ENCODE measurements at regions of chr6 and their contacts with region 1.

Region 1: DNA sequence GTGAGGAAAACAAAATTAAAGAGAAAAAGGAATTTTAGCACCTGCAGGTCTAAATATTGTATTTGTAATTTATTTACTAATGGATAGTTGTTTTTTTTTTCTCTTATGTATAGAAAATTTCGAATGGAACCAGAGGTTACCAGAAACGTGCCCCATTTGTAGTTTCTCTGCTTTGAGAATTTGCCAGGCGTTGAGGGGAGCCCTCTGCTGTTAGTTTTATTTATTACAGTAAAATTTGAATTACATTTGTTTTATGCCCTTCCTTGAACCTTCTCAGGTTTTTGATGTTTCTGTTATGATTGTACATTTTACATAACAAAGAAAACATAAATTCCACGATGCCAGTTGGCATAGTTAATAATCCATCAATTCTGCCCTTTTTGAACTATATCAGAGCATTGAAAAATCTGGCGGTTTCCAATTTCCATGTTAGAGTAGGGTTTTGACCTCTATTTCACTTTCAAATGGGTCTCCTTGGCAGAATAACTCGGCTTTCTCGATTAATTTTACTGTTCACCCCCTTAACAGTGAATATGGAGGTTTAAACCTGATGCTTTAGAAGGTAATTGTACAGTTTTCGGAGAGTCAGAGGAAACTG is 35.1 kb upstream of the RFPL4B start:
- DNase-seq: no peak
- H3K4me3 ChIP-seq: no peak overlapping the region
- H3K27ac ChIP-seq: no peak overlapping the region
- H3K4me1 ChIP-seq: no peaks in the 10 kb centered on the region
- H3K27me3 ChIP-seq: no peaks in the 10 kb centered on the region
- CTCF ChIP-seq: peak in 3 of 4 experiments; percentile 46 to 68 (median 62)
- POLR2A ChIP-seq: no peak

Region 2: GRCh38 chr6:112180095-112180820 is 131.8 kb before region 1 on chr6:
- intact Hi-C with region 1: loop called (anchors 2 kb)
- DNase-seq: peak; percentile 78
- H3K4me3 ChIP-seq: no peak overlapping the region
- H3K27ac ChIP-seq: no peak overlapping the region
- H3K4me1 ChIP-seq: no peaks in the 10 kb centered on the region
- H3K27me3 ChIP-seq: no peaks in the 10 kb centered on the region
- CTCF ChIP-seq: peak; percentile 55 to 82 (median 74)
- POLR2A ChIP-seq: no peak

Region 3: GRCh38 chr6:112237595-112237994 is 74.5 kb before region 1 on chr6:
- intact Hi-C with region 1: loop called (anchors 10 kb)
- DNase-seq: no peak
- H3K4me3 ChIP-seq: no peak overlapping the region
- H3K27ac ChIP-seq: peak overlapping the region in 1 of 2 donors; percentile 6
- H3K4me1 ChIP-seq: no peaks in the 10 kb centered on the region
- H3K27me3 ChIP-seq: no peaks in the 10 kb centered on the region
- CTCF ChIP-seq: no peak
- POLR2A ChIP-seq: no peak

Region 4: DNA sequence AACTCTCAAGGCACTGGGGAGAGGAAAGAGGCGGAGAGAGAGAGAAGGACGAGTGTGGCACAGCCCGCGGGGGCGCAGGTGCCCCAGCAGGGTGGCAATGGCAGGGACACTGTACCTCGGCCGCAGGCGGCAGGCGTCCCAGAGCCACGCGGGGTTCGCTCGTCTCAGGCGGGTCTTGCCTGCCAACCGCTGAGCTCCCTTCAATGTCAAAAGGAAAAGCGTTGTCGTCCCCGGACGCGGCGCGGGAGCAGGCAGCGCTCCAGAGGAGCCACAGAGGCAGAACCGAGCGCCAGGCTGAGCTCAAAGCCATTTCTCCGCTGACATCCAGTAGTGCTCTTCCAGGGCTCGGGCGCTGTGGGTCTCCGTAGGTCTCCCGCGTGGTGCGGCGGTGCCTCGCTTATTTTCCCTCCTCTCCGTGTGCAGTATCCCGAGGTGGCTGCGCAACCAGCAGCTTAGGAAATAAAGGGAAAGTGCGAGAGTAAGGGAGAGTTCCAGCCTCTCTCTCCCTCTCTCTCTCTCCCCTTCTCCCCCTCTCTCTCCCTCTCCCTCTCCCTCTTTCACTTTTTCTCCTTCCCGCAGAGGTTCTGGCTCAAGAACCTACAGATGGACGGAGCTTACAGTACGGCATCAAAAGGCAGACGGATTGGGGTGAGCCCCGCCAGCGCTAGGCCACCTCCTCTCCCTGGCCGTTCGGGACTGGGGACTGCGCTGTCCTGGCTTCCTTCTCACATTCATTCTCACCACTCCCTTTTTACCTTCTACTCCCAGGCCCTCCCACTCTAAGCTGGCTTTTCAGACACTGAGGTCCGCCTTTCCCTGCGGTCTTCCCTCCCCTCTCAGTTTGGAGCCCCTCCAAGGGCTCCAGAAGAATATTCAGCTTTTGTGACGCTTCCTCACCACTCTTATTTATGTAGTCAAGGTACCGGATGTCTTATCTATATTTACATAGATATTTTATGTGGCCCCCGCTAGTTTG is 57.9 kb before region 1 on chr6 and contains the start of gene LAMA4:
- intact Hi-C with region 1: loop called (anchors 5 kb)
- DNase-seq: no peak
- H3K4me3 ChIP-seq: peak within 1 kb of the TSS; percentile 36 to 49
- H3K27ac ChIP-seq: peak within 1 kb of the TSS; percentile 71 to 73
- H3K4me1 ChIP-seq: no peaks in the 10 kb centered on the region
- H3K27me3 ChIP-seq: no peaks in the 10 kb centered on the region
- CTCF ChIP-seq: no peak
- POLR2A ChIP-seq: peak; percentile 45
- total RNA-seq, gene LAMA4: 9.6 to 48.3 TPM

Region 5: DNA sequence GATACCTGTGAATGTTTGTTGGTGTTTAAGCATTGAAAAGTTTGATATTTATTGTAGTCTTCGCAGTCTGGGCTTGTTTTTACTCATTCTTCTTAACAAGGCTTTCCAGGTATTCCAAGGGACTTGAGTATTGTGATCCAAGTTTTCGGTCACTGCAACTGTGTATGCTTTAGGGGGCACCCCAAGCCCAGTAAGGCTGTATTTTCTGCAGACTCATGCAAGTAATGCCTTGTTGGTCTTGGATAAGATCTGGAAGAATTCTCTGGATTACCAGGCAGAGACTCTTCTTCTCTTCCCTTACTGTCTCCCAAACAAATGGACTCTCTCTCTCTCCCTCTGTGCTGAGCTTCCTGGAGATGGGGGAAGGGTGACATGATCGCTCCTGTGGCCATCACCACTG is 117.2 kb after region 1 on chr6:
- intact Hi-C with region 1: no loop called
- DNase-seq: no peak
- H3K4me3 ChIP-seq: no peak overlapping the region
- H3K27ac ChIP-seq: no peak overlapping the region
- H3K4me1 ChIP-seq: no peaks in the 10 kb centered on the region
- H3K27me3 ChIP-seq: no peaks in the 10 kb centered on the region
- CTCF ChIP-seq: no peak
- POLR2A ChIP-seq: no peak

Measured in prostate gland (tissue), 2 donors.